CD14-positive monocyte (primary cell): ENCODE measurements at regions of chr7 and their contacts with region 1.

Region 1: DNA sequence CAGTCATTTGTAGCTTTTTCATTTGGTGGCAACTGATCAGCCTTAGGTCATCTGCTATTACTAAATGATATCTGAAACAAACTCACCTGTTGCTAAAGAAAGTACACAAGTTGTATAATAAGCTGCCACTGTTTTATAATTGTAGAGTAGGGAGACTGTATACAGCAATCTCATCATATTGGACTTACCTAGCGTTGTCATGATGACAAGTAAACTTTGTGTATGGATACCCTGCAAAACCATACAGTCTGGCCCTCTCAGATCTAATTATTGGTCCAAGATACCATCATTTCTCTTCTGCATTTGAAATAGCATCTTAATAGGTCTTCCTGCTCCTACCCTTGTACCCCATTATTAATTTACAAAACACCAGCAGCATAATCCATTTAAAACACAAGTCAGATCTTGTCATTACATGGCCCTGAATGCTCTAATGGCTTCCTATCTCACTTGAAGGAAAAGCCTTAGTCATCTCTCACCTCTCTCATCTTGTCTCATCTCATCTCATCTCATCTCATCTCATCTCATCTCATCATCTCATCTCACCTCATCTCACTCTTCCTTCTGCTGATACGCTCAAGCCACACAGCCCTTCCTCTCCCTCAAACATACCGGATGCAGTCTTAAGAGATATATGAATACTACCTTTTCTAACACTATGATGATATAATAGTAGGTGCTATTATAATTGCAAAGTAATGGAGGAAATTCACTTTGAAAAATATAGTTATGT is 540.6 kb downstream of the MDFIC start:
- DNase-seq: no peak
- H3K4me3 ChIP-seq: no peak overlapping the region
- H3K4me3 Mint-ChIP-seq: no peak overlapping the region
- H3K27ac ChIP-seq: no peak overlapping the region
- H3K27ac Mint-ChIP-seq: no peak overlapping the region
- H3K4me1 ChIP-seq: no peaks in the 10 kb centered on the region
- H3K4me1 Mint-ChIP-seq: no peaks in the 10 kb centered on the region
- H3K27me3 ChIP-seq: no peaks in the 10 kb centered on the region
- H3K27me3 Mint-ChIP-seq: peaks cover 0 to 1% (median 0%) of the 10 kb centered on the region in 3 donors
- CTCF ChIP-seq: no peak

Region 2: DNA sequence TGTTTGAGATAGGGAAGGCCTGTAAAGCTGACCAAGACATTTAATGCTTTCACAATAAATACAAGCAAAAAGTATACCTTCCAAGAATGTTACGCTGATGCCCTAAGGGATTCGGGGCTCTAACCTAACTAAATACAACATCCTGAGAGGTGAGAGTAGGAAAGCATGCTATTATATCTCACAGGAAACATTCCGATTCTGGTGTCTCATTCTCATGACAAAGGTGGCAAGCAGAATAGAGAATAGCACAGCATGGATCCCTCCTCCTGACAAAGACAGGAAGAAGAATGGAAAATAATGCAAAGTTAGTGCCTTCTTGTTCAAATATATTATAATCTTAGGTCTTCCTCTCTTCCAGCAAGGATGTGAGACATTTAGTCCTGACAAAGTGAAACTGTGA is 63.8 kb after region 1 on chr7:
- intact Hi-C with region 1: loop called in 1 of 2 experiments (anchors 10 kb)
- DNase-seq: no peak
- H3K4me3 ChIP-seq: no peak overlapping the region
- H3K4me3 Mint-ChIP-seq: no peak overlapping the region
- H3K27ac ChIP-seq: no peak overlapping the region
- H3K27ac Mint-ChIP-seq: no peak overlapping the region
- H3K4me1 ChIP-seq: no peaks in the 10 kb centered on the region
- H3K4me1 Mint-ChIP-seq: no peaks in the 10 kb centered on the region
- H3K27me3 ChIP-seq: no peaks in the 10 kb centered on the region
- H3K27me3 Mint-ChIP-seq: no peaks in the 10 kb centered on the region
- CTCF ChIP-seq: no peak